Adrenal gland (tissue), 19 donors: ENCODE measurements at regions of chr12 and their contacts with region 1.

Region 1: DNA sequence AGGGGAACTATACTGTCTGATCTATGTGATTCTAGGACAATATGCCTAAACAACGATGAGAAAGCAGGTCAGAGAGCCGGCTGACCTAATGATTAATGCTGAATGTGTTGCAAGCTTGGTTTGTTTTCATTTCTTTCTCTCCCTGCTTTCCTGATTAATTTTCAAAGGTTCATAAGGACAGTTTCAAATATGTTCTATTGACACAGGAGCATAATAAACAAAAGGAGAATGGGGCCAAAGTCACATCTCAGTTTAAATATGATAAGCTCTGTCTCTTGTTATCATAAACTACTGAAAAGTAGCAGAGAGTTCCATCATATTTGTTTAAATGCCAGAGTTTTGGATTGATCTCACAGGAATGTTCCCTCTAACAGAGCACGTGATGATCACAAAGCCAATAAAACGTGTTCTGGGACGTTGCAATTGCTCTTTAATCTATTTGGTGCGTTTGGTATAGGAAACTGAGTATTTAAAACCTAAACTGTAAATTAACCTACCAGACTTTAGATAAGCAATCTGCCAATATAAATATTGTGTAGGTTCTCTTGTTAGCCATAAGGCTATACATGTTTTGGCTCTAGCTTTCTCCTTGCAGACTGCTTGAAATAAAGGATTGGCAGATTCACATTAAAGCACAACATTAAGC is 3.7 kb upstream of the HSD17B6 start:
- DNase-seq: peak in 1 of 7 donors; percentile 14
- H3K4me3 ChIP-seq: no peak overlapping the region
- H3K27ac ChIP-seq: peak overlapping the region in 3 of 5 donors; percentile 5 to 30 (median 25)
- H3K4me1 ChIP-seq: peaks cover 4 to 13% of the 10 kb centered on the region in 2 donors
- H3K27me3 ChIP-seq: no peaks in the 10 kb centered on the region
- CTCF ChIP-seq: no peak
- POLR2A ChIP-seq: no peak

Region 2: GRCh38 chr12:56987551-56988053 is 228.2 kb after region 1 on chr12:
- intact Hi-C with region 1: loop called in 1 of 2 experiments (anchors 5 kb)
- DNase-seq: peak; percentile 82 to 94 (median 84)
- H3K4me3 ChIP-seq: no peak overlapping the region
- H3K27ac ChIP-seq: peak overlapping the region in 2 of 5 donors; percentile 6 to 19
- H3K4me1 ChIP-seq: peaks cover 4 to 24% of the 10 kb centered on the region in 2 donors
- H3K27me3 ChIP-seq: no peaks in the 10 kb centered on the region
- CTCF ChIP-seq: peak; percentile 94 to 98 (median 96)
- POLR2A ChIP-seq: no peak

Region 3: DNA sequence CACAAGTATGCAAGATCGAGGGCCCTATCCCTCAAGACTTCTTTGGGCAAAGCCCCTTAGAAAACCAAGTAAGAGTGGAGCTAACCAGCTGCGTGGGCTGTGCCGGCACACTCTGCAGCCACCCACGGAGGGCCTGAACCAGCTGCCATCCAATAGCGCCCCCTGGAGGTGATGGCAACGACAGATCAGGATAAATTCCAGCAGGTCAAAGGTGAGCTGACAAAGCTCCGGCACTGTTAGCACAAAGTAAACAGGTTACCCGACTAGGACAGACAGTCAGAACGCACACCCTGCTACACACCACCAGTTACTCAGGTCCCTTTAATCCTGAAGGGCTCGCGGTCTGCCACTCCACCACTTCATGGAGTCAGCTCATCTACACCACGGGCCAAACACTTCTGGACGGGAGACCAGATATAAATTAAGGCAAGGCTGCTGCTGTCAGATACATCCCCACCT is 242.1 kb after region 1 on chr12:
- intact Hi-C with region 1: loop called in 1 of 2 experiments (anchors 5 kb)
- DNase-seq: peak; percentile 56 to 86 (median 66)
- H3K4me3 ChIP-seq: no peak overlapping the region
- H3K27ac ChIP-seq: peak overlapping the region in 1 of 5 donors; percentile 0
- H3K4me1 ChIP-seq: peaks cover 8 to 24% of the 10 kb centered on the region in 2 donors
- H3K27me3 ChIP-seq: no peaks in the 10 kb centered on the region
- CTCF ChIP-seq: peak; percentile 58 to 83 (median 68)
- POLR2A ChIP-seq: no peak